ENCODE measurements at regions of chr17 and their contacts with region 1.

Region 1: GRCh38 chr17:31696184-31696602 is 162.9 kb downstream of the COPRS start:
- DNase-seq: peak; percentile 61 to 77
- ATAC-seq: peak; percentile 83 to 89
- H3K4me3 ChIP-seq: no peak overlapping the region
- H3K27ac ChIP-seq: peak overlapping the region in 1 of 4 donors; percentile 29
- H3K4me1 ChIP-seq: peaks cover 15 to 25% of the 10 kb centered on the region in 2 donors
- H3K27me3 ChIP-seq: peaks cover 0 to 4% (median 0%) of the 10 kb centered on the region in 3 donors
- CTCF ChIP-seq: no peak
- POLR2A ChIP-seq: no peak

Region 2: DNA sequence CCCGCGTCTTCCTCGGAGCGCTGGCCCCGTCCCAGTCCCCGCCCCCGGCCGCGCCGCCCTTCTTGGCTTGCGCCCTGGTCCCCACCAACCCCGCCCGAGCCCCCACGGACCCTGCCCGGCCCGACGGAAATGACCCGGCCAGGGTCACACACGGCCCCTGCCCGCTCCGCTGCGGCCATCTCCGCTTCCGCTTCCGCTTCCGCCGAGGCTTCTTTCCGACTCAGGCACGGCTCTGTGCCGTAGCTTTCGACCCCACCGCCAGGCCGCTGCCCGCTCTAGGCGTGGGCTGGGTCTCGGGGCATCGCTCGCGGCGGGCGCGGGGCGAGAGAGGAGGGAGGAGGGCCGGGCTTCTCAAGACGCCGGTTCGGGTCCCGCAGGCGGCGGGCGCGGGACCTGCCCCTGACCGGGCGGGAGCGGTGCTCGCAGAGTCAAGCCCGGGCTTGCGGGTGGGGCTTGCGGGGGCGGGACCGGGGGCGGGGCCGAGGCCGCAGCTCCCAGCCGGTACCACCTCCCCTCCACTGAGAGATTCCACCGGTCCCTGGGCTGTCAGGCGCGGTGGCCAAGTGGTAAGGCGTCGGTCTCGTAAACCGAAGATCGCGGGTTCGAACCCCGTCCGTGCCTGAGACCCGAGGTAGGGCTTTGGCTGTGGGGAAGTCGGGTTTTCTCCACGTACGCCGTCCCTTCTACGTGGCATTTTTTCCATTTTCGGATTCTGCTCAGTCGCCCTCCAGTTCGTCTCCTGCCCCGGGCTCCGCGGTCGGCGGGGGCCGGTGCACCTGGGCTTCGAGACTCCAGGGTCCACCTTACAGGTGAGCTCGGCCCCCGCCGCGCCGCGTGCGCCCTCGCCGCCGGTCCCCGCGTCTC is 146.4 kb before region 1 on chr17:
- in situ Hi-C with region 1: no loop called
- intact Hi-C with region 1: loop called (anchors 10 kb)
- DNase-seq: peak; percentile 83 to 85
- ATAC-seq: peak; percentile 92 to 93
- H3K4me3 ChIP-seq: peak overlapping the region; percentile 83 to 99 (median 94)
- H3K27ac ChIP-seq: peak overlapping the region; percentile 86 to 92 (median 91)
- H3K4me1 ChIP-seq: peaks cover 2 to 5% of the 10 kb centered on the region in 2 donors
- H3K27me3 ChIP-seq: no peaks in the 10 kb centered on the region
- CTCF ChIP-seq: no peak
- POLR2A ChIP-seq: peak; percentile 69 to 72

Region 3: GRCh38 chr17:31778523-31778922 is 82.3 kb after region 1 on chr17:
- in situ Hi-C with region 1: no loop called
- intact Hi-C with region 1: no loop called
- DNase-seq: no peak
- ATAC-seq: no peak
- H3K4me3 ChIP-seq: no peak overlapping the region
- H3K27ac ChIP-seq: no peak overlapping the region
- H3K4me1 ChIP-seq: no peaks in the 10 kb centered on the region
- H3K27me3 ChIP-seq: no peaks in the 10 kb centered on the region
- CTCF ChIP-seq: no peak
- POLR2A ChIP-seq: no peak

Region 4: DNA sequence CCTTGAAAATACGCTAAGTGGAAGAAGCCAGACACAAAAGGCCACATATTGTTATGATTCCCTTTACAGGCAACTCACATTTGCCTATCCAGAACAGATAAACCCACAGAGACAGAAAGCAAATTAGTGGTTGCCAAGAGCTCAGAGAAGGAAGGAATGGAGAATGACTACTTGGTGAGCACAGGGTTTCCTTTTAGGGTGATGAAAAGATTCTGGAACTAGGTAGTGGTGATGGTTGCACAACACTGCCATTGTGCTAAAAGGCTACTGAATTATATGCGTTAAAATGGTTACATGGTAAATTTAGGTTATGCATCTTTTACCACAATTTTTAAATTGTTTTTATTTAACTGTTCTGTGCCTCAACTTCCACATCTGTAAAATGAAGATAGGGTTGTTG is 158.5 kb after region 1 on chr17:
- in situ Hi-C with region 1: no loop called
- intact Hi-C with region 1: no loop called
- DNase-seq: no peak
- ATAC-seq: no peak
- H3K4me3 ChIP-seq: no peak overlapping the region
- H3K27ac ChIP-seq: no peak overlapping the region
- H3K4me1 ChIP-seq: peaks cover 7 to 12% of the 10 kb centered on the region in 2 donors
- H3K27me3 ChIP-seq: no peaks in the 10 kb centered on the region
- CTCF ChIP-seq: no peak
- POLR2A ChIP-seq: no peak